ENCODE measurements at regions of chr3 and their contacts with region 1.

Region 1: GRCh38 chr3:195909644-195910508 is 1.5 kb upstream of the TNK2 start:
- DNase-seq: peak; percentile 89
- H3K4me3 Mint-ChIP-seq: peak overlapping the region; percentile 68
- H3K27ac Mint-ChIP-seq: peak overlapping the region; percentile 80
- H3K4me1 Mint-ChIP-seq: peaks cover 30% of the 10 kb centered on the region
- H3K27me3 Mint-ChIP-seq: no peaks in the 10 kb centered on the region

Region 2: DNA sequence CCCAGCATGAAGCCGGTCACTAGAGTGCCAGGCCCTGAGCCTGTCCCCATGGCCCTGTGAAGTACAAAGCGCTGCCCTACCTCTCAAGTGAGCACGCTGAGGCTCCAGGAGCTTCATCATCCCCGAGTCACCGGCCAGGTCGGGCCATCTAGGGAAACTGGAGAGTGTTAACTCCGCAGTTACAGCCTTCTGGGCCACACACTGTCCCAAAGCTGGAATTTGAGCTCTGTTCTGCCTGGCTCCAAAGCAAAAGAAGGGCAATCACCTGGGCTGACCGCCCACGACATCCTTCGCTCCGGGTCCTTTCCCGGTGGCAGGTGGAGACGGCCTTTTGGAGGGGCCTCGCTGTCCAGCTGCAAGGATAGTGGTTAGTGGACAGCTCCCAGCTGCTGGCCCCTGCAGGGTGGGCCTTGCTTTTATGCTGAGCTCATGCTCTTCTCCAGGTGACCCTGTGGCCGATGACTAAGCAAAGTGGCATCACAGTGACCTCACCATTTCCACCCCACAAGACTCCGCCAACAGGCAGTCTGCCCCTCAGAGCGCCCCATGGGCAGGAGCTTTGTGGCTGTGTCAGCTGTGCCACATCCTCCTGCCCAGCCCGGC is 94.6 kb before region 1 on chr3:
- CTCF ChIA-PET with region 1: no interaction called
- POLR2A ChIA-PET with region 1: no interaction called
- DNase-seq: peak; percentile 28
- H3K4me3 Mint-ChIP-seq: no peak overlapping the region
- H3K27ac Mint-ChIP-seq: no peak overlapping the region
- H3K4me1 Mint-ChIP-seq: peaks cover 10% of the 10 kb centered on the region
- H3K27me3 Mint-ChIP-seq: peaks cover 8% of the 10 kb centered on the region

Region 3: DNA sequence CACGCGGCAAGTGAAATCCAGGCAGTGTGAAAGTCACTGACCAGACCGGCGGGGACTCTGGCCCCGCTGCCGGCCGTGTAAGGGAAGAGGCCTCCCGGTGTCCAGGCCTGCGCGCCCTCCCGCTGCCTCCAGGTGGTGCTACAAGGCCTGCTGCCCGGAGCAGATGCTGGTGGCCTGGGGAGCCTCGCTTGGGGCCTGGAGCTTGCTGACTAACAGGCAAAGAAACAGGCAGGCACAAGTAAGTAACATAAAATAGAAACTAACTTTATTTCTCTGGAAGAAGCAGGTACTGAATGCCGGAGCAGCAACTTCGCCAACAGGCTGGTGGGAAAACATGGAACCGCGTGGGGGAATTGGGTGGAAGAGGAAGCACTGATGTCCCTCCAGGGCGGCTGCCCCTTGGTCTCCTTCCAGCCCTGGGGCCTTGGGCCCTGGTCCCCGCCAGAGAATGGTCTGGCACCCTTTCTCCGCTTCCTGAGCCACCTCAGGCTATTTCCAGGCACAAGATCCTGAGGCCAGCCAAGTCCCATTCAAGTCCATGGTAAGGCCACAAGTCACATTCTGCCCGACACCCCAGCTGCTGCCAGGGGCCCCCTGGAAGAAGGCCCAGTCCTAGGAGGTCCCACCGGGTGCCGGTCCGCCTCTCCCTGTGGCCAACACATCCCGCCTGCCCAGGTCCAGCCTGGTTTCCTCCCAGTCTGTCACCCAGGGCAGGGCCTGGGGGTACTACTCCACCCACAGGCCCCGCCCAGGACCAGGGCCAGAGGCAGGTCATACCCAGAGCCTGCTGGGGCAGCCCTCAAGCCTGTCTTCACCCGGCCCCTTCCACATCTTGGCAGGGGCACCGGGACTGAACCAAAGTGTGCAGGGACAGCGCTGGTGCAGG is 46.5 kb before region 1 on chr3:
- CTCF ChIA-PET with region 1: interaction called, 60 read pairs
- POLR2A ChIA-PET with region 1: interaction called, 9 read pairs
- DNase-seq: peak; percentile 65
- H3K4me3 Mint-ChIP-seq: no peak overlapping the region
- H3K27ac Mint-ChIP-seq: no peak overlapping the region
- H3K4me1 Mint-ChIP-seq: peaks cover 6% of the 10 kb centered on the region
- H3K27me3 Mint-ChIP-seq: peaks cover 5% of the 10 kb centered on the region

Region 4: GRCh38 chr3:196207833-196208607 is 298.1 kb after region 1 on chr3:
- CTCF ChIA-PET with region 1: no interaction called
- POLR2A ChIA-PET with region 1: no interaction called
- DNase-seq: peak; percentile 83
- H3K4me3 Mint-ChIP-seq: peak overlapping the region; percentile 75
- H3K27ac Mint-ChIP-seq: no peak overlapping the region
- H3K4me1 Mint-ChIP-seq: peaks cover 25% of the 10 kb centered on the region
- H3K27me3 Mint-ChIP-seq: peaks cover 30% of the 10 kb centered on the region

Measured in activated CD4-positive, alpha-beta memory T cell treated with anti-CD3 and anti-CD28 coated beads, Interleukin-2, amount 10 ng/mL, durations not matched to agents 7 days and 5 days (primary cell).